HEK293T (cell line): ENCODE measurements at regions of chr4 and their contacts with region 1.

Region 1: DNA sequence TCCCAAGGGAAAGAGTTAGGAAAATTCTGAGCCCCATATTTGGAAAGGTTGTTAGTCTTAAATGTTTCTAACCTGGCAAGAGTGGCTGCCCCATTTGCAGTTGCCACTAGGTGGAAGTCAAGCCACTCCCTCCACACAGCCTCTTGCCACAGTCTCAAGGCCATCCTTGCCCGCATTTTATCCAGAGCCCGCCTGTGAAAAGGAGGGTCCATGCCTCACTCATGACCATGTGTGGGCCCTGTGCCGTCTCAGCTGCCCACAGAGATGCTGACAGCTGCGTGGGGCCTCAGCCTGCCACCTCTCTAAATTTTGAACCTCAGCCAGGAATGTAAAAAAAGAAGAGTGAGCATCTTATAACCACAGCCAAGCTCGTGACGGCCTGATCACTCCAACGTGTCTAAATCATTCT is 201.5 kb upstream of the FAM241A start:
- DNase-seq: peak; percentile 78

Region 2: DNA sequence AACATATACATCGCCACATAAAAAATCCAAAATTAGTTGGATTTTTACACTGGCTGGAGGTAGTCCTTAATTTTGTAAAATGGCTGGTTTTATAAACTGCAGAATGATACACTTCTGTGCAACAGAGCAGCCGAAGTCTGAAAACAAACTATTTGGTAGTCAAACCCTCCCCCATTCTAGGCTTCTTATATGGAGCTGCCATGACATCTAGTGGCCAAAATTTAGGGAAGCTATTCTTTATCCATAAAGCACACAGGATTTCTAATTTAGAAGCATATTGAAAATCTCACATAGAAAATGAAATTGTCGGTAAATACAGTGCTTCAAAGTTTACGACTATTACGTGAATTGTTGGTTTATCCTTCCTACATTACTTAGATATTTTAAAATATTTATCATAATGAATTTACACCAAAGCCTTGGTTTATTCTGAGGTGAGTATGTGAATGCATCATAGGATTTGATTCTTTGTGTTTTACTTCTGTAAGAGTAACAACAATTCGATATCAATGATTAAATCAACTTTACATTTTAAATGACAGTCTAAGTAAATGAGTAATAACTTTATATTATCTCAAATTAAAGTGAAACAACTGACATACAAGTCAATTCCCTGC is 88.0 kb after region 1 on chr4:
- CTCF ChIA-PET with region 1: interaction called, 18 read pairs
- POLR2A ChIA-PET with region 1: no interaction called
- DNase-seq: peak; percentile 58

Region 3: GRCh38 chr4:112327965-112328733 is 384.4 kb after region 1 on chr4:
- CTCF ChIA-PET with region 1: no interaction called
- POLR2A ChIA-PET with region 1: no interaction called
- DNase-seq: peak; percentile 20